Common myeloid progenitor, CD34-positive (primary cell): ENCODE measurements at regions of chr4 and their contacts with region 1.

Region 1: DNA sequence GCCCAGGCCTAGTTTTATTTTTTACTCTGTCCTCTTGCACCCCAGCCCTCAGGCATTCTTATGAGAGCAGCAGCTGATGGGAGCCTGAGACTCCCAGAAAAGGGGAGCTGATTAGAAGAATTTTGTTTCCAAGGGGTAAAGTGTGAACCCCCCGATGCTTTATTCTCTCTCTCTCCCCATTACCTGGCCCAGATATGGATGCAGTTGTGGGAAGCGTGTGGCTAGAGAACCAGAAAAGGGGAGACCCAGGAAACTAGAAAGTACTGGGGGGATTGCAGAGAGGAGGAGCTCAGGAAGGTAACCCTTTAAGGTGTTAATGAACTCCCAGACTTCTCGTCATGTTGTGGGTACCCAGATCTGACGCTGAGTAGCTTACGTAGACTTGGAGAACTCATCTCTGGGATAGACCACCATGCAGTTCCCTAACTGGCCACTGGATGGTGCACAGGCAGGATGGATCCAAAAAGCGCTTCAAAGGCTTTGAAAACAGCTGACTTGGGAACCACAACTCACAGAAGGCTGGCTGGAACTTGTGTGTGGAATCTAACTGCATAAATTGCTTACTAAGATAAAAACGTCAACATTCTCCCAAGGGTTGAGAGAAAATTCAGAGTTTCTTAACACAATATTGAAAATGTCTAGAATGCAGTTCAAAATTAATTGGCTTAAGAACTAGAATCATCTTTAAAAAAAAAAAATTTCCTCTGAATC is 64.7 kb downstream of the TBC1D14 start:
- DNase-seq: peak; percentile 83 to 89 (median 85)
- H3K4me3 ChIP-seq: no peak overlapping the region
- H3K27ac ChIP-seq: no peak overlapping the region
- H3K4me1 ChIP-seq: peaks cover 0 to 2% (median 0%) of the 10 kb centered on the region in 4 experiments
- H3K27me3 ChIP-seq: no peaks in the 10 kb centered on the region

Region 2: GRCh38 chr4:6963139-6963611 is 11.1 kb before region 1 on chr4:
- CTCF ChIA-PET with region 1: interaction called, 11 read pairs
- POLR2A ChIA-PET with region 1: no interaction called
- DNase-seq: peak in 1 of 3 donors; percentile 19
- H3K4me3 ChIP-seq: no peak overlapping the region
- H3K27ac ChIP-seq: no peak overlapping the region
- H3K4me1 ChIP-seq: peaks cover 3 to 38% (median 17%) of the 10 kb centered on the region in 4 experiments
- H3K27me3 ChIP-seq: no peaks in the 10 kb centered on the region